Pancreas (tissue), 10 donors: ENCODE measurements at regions of chr19 and their contacts with region 1.

Region 1: GRCh38 chr19:29873024-29873800 is 61.4 kb downstream of the CCNE1 start:
- DNase-seq: peak; percentile 11 to 88 (median 57)
- ATAC-seq: peak; percentile 87 to 93 (median 88)
- H3K4me3 ChIP-seq: peak overlapping the region; percentile 18 to 54 (median 31)
- H3K27ac ChIP-seq: no peak overlapping the region
- H3K4me1 ChIP-seq: peaks cover 0 to 4% (median 2%) of the 10 kb centered on the region in 3 donors
- H3K27me3 ChIP-seq: peaks cover 0 to 4% (median 0%) of the 10 kb centered on the region in 4 donors
- CTCF ChIP-seq: peak; percentile 74 to 87 (median 79)

Region 2: DNA sequence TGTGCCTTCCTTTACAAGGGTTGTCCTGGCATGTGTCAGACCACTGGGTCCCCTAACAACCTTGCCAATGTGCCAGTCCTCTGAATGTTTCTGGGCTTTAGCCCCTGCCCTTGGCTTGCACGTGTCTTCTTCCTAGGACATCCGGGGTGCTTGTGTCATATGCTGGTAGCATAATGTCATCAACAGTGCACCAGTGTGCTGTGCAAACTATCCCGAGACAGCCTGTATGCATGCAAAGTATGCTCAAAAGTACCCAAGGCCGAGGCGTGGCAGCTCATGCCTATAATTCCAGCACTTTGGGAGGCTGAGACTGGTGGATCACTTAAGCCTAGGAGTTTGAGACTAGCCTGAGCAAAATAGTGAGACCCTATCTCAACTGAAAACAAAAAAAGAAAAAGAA is 137.4 kb before region 1 on chr19:
- intact Hi-C with region 1: loop called in 1 of 3 experiments (anchors 10 kb)
- DNase-seq: no peak
- ATAC-seq: no peak
- H3K4me3 ChIP-seq: no peak overlapping the region
- H3K27ac ChIP-seq: no peak overlapping the region
- H3K4me1 ChIP-seq: no peaks in the 10 kb centered on the region
- H3K27me3 ChIP-seq: peaks cover 0 to 7% (median 0%) of the 10 kb centered on the region in 4 donors
- CTCF ChIP-seq: no peak

Region 3: DNA sequence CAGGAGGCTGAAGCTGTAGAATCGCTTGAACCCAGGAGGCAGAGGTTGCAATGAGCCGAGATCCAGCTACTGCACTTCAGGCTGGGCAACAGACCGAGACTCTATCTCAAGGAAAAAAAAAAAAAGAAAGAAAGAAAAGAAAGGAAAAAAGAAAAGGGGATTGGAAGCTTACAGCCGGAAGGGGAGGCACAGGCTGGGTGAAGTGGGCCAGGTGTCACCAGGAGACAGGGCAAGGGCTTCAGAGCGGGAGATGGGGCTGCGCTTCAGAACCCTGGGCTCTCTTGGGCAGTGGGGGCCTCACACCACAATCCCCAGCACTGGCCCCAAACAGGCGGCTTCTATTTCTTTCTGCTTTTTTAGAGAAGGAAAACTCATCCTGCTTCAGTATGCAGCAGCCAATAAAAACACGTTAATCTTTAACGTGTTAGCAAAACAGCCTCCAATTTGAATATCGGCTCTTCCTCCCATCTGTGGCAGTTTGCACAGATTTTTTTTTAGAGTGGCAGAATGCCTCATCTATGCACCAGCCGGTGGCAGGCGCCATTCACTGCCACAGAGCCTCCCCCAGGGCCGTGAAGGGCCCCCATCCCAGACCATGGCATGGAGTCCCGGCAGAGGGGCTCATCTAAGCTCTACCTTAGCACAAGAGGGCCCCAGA is 111.5 kb before region 1 on chr19:
- intact Hi-C with region 1: loop called in 2 of 3 experiments (anchors 5 to 10 kb)
- DNase-seq: no peak
- ATAC-seq: no peak
- H3K4me3 ChIP-seq: no peak overlapping the region
- H3K27ac ChIP-seq: no peak overlapping the region
- H3K4me1 ChIP-seq: no peaks in the 10 kb centered on the region
- H3K27me3 ChIP-seq: no peaks in the 10 kb centered on the region
- CTCF ChIP-seq: no peak

Region 4: DNA sequence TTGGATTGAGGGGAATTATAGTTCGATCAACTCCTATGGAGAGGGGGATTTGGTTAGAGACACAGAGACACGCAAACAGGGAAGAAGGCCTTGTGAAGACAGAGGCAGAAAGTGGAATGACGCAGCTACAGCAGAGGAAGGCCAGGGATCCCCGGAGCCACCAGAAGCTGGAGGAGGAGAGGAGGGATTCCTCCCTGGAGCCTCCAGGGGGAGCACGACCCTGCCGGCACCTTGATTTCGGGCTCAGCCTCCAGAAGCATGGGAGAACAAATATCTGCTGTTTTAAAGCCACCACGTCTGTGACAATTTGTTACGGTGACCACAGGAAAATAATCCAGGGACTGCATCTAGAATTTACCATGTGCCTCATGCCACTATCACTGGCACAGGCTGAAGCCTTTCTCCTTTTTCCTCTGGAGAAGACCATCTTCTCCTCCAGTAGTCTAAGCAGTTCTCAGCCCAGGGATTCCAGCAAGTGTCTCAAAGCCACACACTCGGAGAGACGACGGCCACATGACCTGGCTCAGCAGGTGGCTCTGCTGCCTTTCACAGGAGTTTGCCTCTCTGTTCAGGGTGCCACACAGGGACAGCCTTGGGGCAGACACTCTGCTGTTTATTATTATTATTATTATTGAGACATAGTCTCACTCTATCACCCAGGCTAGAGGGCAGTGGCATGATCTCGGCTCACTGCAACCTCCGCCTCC is 101.4 kb before region 1 on chr19:
- intact Hi-C with region 1: loop called (anchors 5 to 10 kb)
- DNase-seq: peak; percentile 40 to 85 (median 67)
- ATAC-seq: peak; percentile 80 to 98 (median 96)
- H3K4me3 ChIP-seq: no peak overlapping the region
- H3K27ac ChIP-seq: no peak overlapping the region
- H3K4me1 ChIP-seq: no peaks in the 10 kb centered on the region
- H3K27me3 ChIP-seq: no peaks in the 10 kb centered on the region
- CTCF ChIP-seq: peak; percentile 45 to 78 (median 68)